Transverse colon (tissue), 4 donors: ENCODE measurements at regions of chr7 and their contacts with region 1.

Region 1: DNA sequence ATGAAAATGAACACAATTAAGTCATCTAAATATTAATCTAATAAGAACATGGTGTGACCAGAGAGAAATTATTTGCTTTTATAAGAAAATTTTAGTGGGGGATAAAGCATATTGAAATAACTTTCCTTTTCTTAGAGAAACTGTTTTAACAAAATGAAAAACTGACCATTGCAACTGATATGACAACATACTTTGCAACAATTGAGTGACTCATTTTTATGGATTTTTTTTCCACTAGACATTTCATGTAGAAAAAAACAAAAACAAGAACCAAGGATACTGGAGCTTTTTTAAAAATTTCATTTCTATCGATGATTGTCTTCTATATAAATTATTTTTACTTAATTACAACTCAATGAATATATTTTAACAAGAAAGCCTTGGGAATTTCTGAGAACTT is 90.0 kb downstream of the C1GALT1 start:
- DNase-seq: no peak
- H3K4me3 ChIP-seq: no peak overlapping the region
- H3K27ac ChIP-seq: no peak overlapping the region
- H3K4me1 ChIP-seq: no peaks in the 10 kb centered on the region
- H3K27me3 ChIP-seq: no peaks in the 10 kb centered on the region
- CTCF ChIP-seq: no peak
- EP300 ChIP-seq: no peak
- POLR2A ChIP-seq: no peak

Region 2: DNA sequence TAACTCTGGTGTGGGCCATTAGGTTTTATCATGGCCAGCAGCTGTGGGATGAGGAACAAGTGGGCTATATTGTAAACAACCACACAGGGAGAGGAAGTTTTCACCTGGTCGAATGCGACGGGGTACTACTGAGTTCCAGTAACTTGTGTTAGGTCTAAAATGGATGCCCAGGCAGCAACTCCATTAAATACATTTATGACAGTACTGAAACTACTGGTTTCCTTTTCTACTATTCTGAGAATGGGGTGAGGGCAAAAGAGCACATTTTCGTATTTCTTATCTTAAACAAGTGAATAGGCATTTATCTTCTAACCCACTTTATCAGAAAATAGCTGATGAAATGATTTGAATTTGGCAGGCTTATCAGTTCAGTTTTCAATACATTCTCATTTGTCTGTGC is 19.8 kb after region 1 on chr7:
- in situ Hi-C with region 1: no loop called
- intact Hi-C with region 1: loop called (anchors 1 kb)
- DNase-seq: no peak
- H3K4me3 ChIP-seq: no peak overlapping the region
- H3K27ac ChIP-seq: no peak overlapping the region
- H3K4me1 ChIP-seq: no peaks in the 10 kb centered on the region
- H3K27me3 ChIP-seq: no peaks in the 10 kb centered on the region
- CTCF ChIP-seq: no peak
- EP300 ChIP-seq: no peak
- POLR2A ChIP-seq: no peak